Activated CD4-positive, alpha-beta memory T cell treated with anti-CD3 and anti-CD28 coated beads, Interleukin-2, amount 10 ng/mL, durations not matched to agents 7 days and 5 days (primary cell): ENCODE measurements at regions of chr1 and their contacts with region 1.

Region 1: GRCh38 chr1:204814181-204814884 is 56.3 kb upstream of the NFASC start:
- DNase-seq: no peak
- H3K4me3 Mint-ChIP-seq: no peak overlapping the region
- H3K27ac Mint-ChIP-seq: no peak overlapping the region
- H3K4me1 Mint-ChIP-seq: no peaks in the 10 kb centered on the region
- H3K27me3 Mint-ChIP-seq: peaks cover 26% of the 10 kb centered on the region

Region 2: DNA sequence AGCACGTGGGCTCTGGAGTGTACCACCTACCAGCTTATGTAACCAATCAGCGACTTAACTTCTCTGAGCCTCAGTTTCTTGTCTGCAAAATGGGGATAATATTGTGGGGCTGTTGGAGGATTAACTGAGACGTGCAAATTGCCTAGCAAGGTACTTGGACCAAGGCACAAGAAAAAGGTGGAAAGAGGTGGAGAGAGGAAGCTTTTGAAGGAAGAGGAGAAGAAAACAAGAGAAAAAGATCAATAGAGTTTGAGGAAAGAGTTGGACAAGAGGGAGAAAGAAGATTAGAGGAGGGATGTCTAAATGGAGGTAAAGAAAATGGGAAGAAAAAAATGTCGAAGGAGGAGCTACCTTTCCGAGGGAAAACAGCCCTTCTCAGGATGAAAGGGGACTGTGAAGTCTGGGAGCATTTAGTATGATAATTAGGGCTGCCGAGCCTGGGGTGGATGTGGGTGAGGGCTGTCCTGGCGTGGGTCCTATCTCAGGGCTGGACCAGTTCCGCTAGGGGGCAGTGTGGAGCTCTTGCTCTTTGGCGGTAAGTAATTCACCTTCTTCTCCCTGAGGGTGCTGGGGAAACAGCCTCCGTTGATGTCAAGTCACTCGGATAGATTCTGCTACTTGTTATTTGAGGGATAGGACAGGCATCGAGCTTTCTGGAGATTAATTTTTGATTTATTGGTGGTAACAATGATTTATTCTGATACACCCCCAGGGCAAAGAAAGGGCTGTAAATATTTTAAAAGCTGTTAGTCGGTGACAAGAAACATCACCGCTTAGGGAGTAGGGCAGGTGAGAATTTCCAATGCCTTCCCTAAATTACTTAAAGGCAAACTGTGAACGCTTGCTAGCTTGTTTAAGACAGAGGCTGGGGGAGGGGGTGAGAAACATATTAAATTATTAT is 22.6 kb before region 1 on chr1:
- CTCF ChIA-PET with region 1: interaction called, 12 read pairs
- POLR2A ChIA-PET with region 1: no interaction called
- DNase-seq: peak; percentile 80
- H3K4me3 Mint-ChIP-seq: no peak overlapping the region
- H3K27ac Mint-ChIP-seq: no peak overlapping the region
- H3K4me1 Mint-ChIP-seq: no peaks in the 10 kb centered on the region
- H3K27me3 Mint-ChIP-seq: peaks cover 32% of the 10 kb centered on the region